ENCODE measurements at regions of chr3 and their contacts with region 1.

Region 1: DNA sequence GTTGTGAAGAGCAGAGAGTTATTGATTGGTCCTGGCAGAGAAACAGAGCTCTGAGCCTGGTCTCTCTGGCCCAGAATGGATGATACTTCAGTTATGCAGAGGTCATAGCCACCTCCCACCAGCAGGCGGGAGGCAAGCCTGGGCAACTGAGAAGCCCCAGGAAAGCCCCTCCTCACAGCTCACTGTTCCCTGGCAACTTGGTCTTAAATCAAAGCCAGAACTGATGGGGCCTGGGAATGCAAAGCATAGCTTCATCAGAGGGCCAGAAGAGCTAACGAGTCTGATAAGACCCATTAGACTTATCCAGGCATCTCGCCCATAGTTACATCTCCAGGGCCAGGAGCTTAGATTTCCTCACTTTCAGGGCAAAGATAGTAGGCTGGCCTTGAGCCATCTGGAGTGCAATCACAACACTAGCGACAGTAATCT is 5.5 kb upstream of the COLQ start:
- DNase-seq: no peak
- ATAC-seq: peak; percentile 98
- H3K4me3 ChIP-seq: no peak overlapping the region
- H3K27ac ChIP-seq: no peak overlapping the region
- H3K4me1 ChIP-seq: no peaks in the 10 kb centered on the region
- H3K27me3 ChIP-seq: no peaks in the 10 kb centered on the region
- CTCF ChIP-seq: peak; percentile 44 to 66 (median 59)
- EP300 ChIP-seq: no peak
- POLR2A ChIP-seq: no peak
- RAD21 ChIP-seq: peak; percentile 66

Region 2: GRCh38 chr3:15514663-15515340 is 12.2 kb before region 1 on chr3:
- CTCF ChIA-PET with region 1: interaction called, 13 read pairs
- POLR2A ChIA-PET with region 1: no interaction called
- RAD21 ChIA-PET with region 1: interaction called, 3 read pairs
- SMC1A ChIA-PET with region 1: interaction called, 7 read pairs
- in situ Hi-C with region 1: no loop called
- intact Hi-C with region 1: no loop called
- DNase-seq: no peak
- ATAC-seq: no peak
- H3K4me3 ChIP-seq: no peak overlapping the region
- H3K27ac ChIP-seq: no peak overlapping the region
- H3K4me1 ChIP-seq: no peaks in the 10 kb centered on the region
- H3K27me3 ChIP-seq: no peaks in the 10 kb centered on the region
- CTCF ChIP-seq: no peak
- EP300 ChIP-seq: no peak
- POLR2A ChIP-seq: no peak
- RAD21 ChIP-seq: no peak